Sigmoid colon (tissue), 7 donors: ENCODE measurements at regions of chr2 and their contacts with region 1.

Region 1: DNA sequence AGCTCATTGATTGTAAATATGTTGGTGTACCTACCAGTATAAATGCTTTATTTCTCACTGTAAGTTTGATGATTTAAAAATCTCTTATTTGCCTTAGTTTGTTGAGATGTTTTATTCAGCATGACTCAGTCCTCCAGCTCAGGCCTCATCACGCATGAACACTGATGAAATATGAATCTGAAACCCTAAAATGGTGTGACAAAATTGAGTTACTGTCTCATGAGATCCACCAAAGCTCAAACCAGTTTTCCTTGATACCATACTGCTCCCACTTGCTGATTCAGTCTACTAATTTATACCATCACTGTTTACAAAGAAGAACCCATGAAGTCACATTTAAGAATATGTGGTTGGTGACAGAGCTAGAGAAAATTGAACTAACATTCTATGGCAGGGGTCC is 524.9 kb downstream of the LRRTM4 start:
- DNase-seq: no peak
- H3K4me3 ChIP-seq: no peak overlapping the region
- H3K27ac ChIP-seq: no peak overlapping the region
- H3K4me1 ChIP-seq: no peaks in the 10 kb centered on the region
- H3K27me3 ChIP-seq: no peaks in the 10 kb centered on the region
- CTCF ChIP-seq: no peak
- EP300 ChIP-seq: no peak
- POLR2A ChIP-seq: no peak

Region 2: GRCh38 chr2:76975752-76976151 is 21.5 kb before region 1 on chr2:
- intact Hi-C with region 1: loop called (anchors 1 kb)
- DNase-seq: no peak
- H3K4me3 ChIP-seq: no peak overlapping the region
- H3K27ac ChIP-seq: no peak overlapping the region
- H3K4me1 ChIP-seq: peaks cover 0 to 37% (median 10%) of the 10 kb centered on the region in 4 donors
- H3K27me3 ChIP-seq: no peaks in the 10 kb centered on the region
- CTCF ChIP-seq: no peak
- EP300 ChIP-seq: no peak
- POLR2A ChIP-seq: no peak